ENCODE measurements at regions of chr17 and their contacts with region 1.

Region 1: DNA sequence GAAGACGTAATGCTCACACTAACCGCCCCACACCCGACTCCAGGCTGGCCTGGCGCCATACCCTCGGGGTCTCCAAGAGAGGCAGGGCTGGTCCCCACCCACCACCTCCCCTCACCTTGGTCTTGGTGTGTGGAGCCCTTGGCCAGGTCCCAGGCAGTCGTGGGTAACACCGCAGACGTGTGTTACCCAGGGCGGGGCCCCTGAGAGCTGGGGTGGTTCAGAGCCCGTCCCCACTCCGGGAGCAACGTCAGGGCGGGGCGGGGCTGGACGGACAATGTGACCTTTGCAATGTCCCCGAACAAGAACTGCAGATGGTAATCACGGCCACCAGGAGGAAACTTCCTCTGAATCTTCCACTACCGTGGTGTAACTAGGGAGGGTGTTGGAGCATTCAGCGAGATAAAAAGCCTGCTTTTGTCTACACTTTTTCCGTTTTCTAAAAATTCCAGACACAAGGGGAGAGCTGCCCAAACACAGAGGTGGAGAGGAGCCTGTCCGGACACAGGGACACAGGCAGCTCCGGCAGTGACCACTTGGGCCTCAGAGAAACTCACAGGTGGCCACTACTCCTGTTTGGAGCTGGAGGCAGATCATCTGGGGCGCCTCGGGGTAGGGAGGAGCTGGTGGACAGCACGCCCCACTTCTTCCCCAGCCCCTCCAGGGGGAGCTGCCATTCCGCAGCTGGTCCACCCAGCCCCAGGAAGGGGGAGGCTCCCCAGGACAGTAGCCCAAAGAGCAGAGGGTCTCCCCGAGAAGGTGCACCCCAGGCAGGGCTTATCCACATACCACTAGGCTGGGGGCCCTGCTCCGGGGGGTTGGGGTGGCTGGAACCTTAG is 14.2 kb upstream of the SLC38A10 start:
- DNase-seq: peak; percentile 84
- H3K4me3 ChIP-seq: no peak overlapping the region
- H3K27ac ChIP-seq: peak overlapping the region in 1 of 2 experiments; percentile 99; a peak in 2 of 4 replicates
- H3K4me1 ChIP-seq: peaks cover 0 to 87% of the 10 kb centered on the region in 2 experiments; a peak in 2 of 4 replicates
- H3K27me3 ChIP-seq: peaks cover 6% of the 10 kb centered on the region; the same call in 1 of the 2 replicates
- CTCF ChIP-seq: peak; percentile 50
- EP300 ChIP-seq: no peak
- RAD21 ChIP-seq: peak; percentile 46

Region 2: DNA sequence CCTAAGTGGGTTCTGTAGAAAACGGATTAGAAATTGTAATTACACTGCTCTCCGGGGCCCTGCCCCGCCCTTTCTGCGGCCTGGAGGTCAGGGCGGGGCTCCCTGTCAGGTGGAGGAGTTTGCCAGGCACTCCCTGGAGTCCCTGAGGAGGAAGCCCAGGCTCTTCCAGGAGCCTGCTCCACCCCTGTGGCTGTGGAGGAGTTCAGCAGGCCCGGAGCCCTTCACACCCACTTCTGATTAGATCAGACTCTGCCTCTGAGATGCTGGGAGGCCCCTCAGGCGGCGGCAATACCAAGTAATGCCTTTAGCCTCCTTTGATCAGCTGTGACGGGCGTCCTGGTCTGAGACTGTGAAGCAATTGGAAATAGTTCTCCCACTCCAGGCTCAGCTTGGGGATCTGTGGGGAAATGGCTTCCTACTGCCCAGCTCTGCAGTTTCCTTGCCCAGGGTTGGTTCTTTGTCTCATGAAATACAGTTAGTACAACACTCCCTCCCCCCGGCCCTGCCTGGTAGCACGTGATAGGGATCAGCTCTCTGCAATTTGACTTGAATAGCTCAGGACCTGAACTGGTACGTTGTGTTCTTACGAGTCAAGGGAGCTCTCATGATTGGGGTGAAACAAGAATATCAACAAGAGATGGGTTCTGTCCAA is 252.1 kb before region 1 on chr17:
- CTCF ChIA-PET with region 1: no interaction called
- POLR2A ChIA-PET with region 1: no interaction called
- DNase-seq: peak; percentile 84
- H3K4me3 ChIP-seq: no peak overlapping the region
- H3K27ac ChIP-seq: peak overlapping the region in 1 of 2 experiments; percentile 45; a peak in 2 of 4 replicates
- H3K4me1 ChIP-seq: peaks cover 9 to 24% of the 10 kb centered on the region in 2 experiments; a peak in 1 of 4 replicates
- H3K27me3 ChIP-seq: no peaks in the 10 kb centered on the region
- CTCF ChIP-seq: no peak
- EP300 ChIP-seq: no peak
- RAD21 ChIP-seq: peak; percentile 35; the same call in 1 of the 2 replicates

Region 3: GRCh38 chr17:81322271-81323082 is 13.2 kb after region 1 on chr17:
- CTCF ChIA-PET with region 1: interaction called, 295 read pairs
- POLR2A ChIA-PET with region 1: interaction called, 32 read pairs
- DNase-seq: peak; percentile 94
- H3K4me3 ChIP-seq: no peak overlapping the region
- H3K27ac ChIP-seq: peak overlapping the region in 1 of 2 experiments; percentile 83; a peak in 1 of 4 replicates
- H3K4me1 ChIP-seq: peaks cover 0 to 49% of the 10 kb centered on the region in 2 experiments; a peak in 1 of 4 replicates
- H3K27me3 ChIP-seq: no peaks in the 10 kb centered on the region
- CTCF ChIP-seq: peak; percentile 56
- EP300 ChIP-seq: no peak
- RAD21 ChIP-seq: peak; percentile 43

Region 4: GRCh38 chr17:81328978-81329919 is 20.0 kb after region 1 on chr17:
- CTCF ChIA-PET with region 1: interaction called, 295 read pairs
- POLR2A ChIA-PET with region 1: interaction called, 32 read pairs
- DNase-seq: peak; percentile 91
- H3K4me3 ChIP-seq: no peak overlapping the region
- H3K27ac ChIP-seq: peak overlapping the region; percentile 63 to 97
- H3K4me1 ChIP-seq: peaks cover 19 to 80% of the 10 kb centered on the region in 2 experiments
- H3K27me3 ChIP-seq: no peaks in the 10 kb centered on the region
- CTCF ChIP-seq: no peak
- EP300 ChIP-seq: peak; percentile 71 to 87; a peak in 3 of 4 replicates
- RAD21 ChIP-seq: peak; percentile 15; the same call in 1 of the 2 replicates

Region 5: GRCh38 chr17:81335388-81336148 is 26.3 kb after region 1 on chr17:
- CTCF ChIA-PET with region 1: interaction called, 295 read pairs
- POLR2A ChIA-PET with region 1: interaction called, 37 read pairs
- DNase-seq: no peak
- H3K4me3 ChIP-seq: no peak overlapping the region
- H3K27ac ChIP-seq: no peak overlapping the region; a peak in 1 of 4 replicates
- H3K4me1 ChIP-seq: peaks cover 0 to 91% of the 10 kb centered on the region in 2 experiments; a peak in 2 of 4 replicates
- H3K27me3 ChIP-seq: no peaks in the 10 kb centered on the region
- CTCF ChIP-seq: no peak
- EP300 ChIP-seq: no peak
- RAD21 ChIP-seq: no peak

Region 6: GRCh38 chr17:81342269-81343070 is 33.2 kb after region 1 on chr17:
- CTCF ChIA-PET with region 1: interaction called, 17 read pairs
- POLR2A ChIA-PET with region 1: interaction called, 37 read pairs
- DNase-seq: no peak
- H3K4me3 ChIP-seq: peak overlapping the region; percentile 100
- H3K27ac ChIP-seq: peak overlapping the region; percentile 87 to 99
- H3K4me1 ChIP-seq: peaks cover 10 to 64% of the 10 kb centered on the region in 2 experiments
- H3K27me3 ChIP-seq: no peaks in the 10 kb centered on the region
- CTCF ChIP-seq: no peak
- EP300 ChIP-seq: no peak
- RAD21 ChIP-seq: no peak

Region 7: DNA sequence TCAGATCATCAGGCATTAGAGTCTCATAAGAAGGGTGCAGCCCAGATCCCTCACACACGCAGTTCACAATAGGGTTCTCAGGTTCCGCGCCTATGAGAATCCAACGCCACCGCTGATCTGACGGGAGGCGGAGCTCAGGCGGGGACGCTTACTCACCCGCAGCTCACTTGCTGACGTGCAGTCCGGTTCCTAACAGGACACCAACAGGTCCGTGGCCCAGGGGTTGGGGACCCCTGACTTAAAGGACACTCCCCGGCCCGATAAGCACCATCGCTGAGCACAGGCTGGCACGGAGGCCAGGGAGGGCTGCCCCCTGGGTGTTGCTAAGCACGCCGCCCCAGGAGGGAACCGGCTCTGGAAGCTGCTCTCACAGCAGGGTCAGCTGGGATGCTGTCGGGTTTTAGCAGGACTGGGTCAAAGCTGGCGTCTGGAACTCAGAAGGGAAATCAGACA is 55.9 kb after region 1 on chr17:
- CTCF ChIA-PET with region 1: no interaction called
- POLR2A ChIA-PET with region 1: no interaction called
- DNase-seq: no peak
- H3K4me3 ChIP-seq: no peak overlapping the region
- H3K27ac ChIP-seq: no peak overlapping the region
- H3K4me1 ChIP-seq: peaks cover 0 to 12% of the 10 kb centered on the region in 2 experiments; a peak in 1 of 4 replicates
- H3K27me3 ChIP-seq: peaks cover 15% of the 10 kb centered on the region; the same call in 1 of the 2 replicates
- CTCF ChIP-seq: no peak
- EP300 ChIP-seq: no peak
- RAD21 ChIP-seq: no peak

Region 8: GRCh38 chr17:81394921-81395599 is 85.8 kb after region 1 on chr17 and contains the start of gene BAHCC1:
- CTCF ChIA-PET with region 1: interaction called, 15 read pairs
- POLR2A ChIA-PET with region 1: interaction called, 6 read pairs
- DNase-seq: peak; percentile 97
- H3K4me3 ChIP-seq: peak within 1 kb of the TSS; percentile 60 to 80
- H3K27ac ChIP-seq: peak within 1 kb of the TSS; percentile 83 to 89
- H3K4me1 ChIP-seq: peaks cover 31 to 68% of the 10 kb centered on the region in 2 experiments
- H3K27me3 ChIP-seq: no peaks in the 10 kb centered on the region
- CTCF ChIP-seq: no peak
- EP300 ChIP-seq: peak in 1 of 2 experiments; percentile 51; a peak in 1 of 4 replicates
- RAD21 ChIP-seq: no peak; the same call in 1 of the 2 replicates
- polyA plus RNA-seq, gene BAHCC1: 3.6 and 6.4 TPM in 2 replicates

Measured in SK-N-SH (cell line).